A549 (cell line): ENCODE measurements at regions of chr6 and their contacts with region 1.

Region 1: GRCh38 chr6:108039681-108040080 is 34.9 kb downstream of the OSTM1 start:
- DNase-seq: no peak
- ATAC-seq: no peak
- H3K4me3 ChIP-seq: no peak overlapping the region
- H3K27ac ChIP-seq: no peak overlapping the region
- H3K4me1 ChIP-seq: no peaks in the 10 kb centered on the region
- CTCF ChIP-seq: no peak
- EP300 ChIP-seq: no peak
- POLR2A ChIP-seq: no peak
- RAD21 ChIP-seq: no peak

Region 2: DNA sequence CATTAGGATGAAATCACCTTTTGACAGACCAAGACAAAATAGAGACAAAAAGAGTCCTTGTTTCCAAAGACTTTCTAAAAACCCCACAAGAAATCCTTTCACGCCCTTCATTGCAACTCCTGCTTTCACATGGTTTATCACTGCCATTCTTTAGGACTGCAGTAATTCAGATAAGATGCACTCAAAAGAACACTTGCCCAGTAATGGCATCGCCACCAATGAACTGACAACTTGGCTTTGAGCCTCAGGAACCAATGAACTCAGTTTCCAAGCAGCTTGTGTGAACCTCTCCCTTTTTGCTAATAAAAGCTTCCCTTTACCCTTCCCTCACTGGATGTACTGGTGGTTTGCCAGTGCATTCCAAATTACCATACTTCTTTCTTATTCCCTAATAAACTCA is 13.0 kb after region 1 on chr6:
- CTCF ChIA-PET with region 1: interaction called, 10 read pairs
- POLR2A ChIA-PET with region 1: no interaction called
- DNase-seq: no peak
- ATAC-seq: no peak
- H3K4me3 ChIP-seq: no peak overlapping the region
- H3K27ac ChIP-seq: no peak overlapping the region
- H3K4me1 ChIP-seq: no peaks in the 10 kb centered on the region
- CTCF ChIP-seq: no peak
- EP300 ChIP-seq: no peak
- POLR2A ChIP-seq: no peak
- RAD21 ChIP-seq: no peak